Activated CD4-positive, alpha-beta memory T cell treated with anti-CD3 and anti-CD28 coated beads for 36 hours (primary cell): ENCODE measurements at regions of chr9 and their contacts with region 1.

Region 1: GRCh38 chr9:75027187-75028107 is 646 bp downstream of the CARNMT1 start:
- DNase-seq: peak; percentile 68
- H3K4me3 Mint-ChIP-seq: peak overlapping the region; percentile 99
- H3K27ac Mint-ChIP-seq: peak overlapping the region; percentile 97
- H3K4me1 Mint-ChIP-seq: peaks cover 35% of the 10 kb centered on the region
- H3K27me3 Mint-ChIP-seq: no peaks in the 10 kb centered on the region

Region 2: DNA sequence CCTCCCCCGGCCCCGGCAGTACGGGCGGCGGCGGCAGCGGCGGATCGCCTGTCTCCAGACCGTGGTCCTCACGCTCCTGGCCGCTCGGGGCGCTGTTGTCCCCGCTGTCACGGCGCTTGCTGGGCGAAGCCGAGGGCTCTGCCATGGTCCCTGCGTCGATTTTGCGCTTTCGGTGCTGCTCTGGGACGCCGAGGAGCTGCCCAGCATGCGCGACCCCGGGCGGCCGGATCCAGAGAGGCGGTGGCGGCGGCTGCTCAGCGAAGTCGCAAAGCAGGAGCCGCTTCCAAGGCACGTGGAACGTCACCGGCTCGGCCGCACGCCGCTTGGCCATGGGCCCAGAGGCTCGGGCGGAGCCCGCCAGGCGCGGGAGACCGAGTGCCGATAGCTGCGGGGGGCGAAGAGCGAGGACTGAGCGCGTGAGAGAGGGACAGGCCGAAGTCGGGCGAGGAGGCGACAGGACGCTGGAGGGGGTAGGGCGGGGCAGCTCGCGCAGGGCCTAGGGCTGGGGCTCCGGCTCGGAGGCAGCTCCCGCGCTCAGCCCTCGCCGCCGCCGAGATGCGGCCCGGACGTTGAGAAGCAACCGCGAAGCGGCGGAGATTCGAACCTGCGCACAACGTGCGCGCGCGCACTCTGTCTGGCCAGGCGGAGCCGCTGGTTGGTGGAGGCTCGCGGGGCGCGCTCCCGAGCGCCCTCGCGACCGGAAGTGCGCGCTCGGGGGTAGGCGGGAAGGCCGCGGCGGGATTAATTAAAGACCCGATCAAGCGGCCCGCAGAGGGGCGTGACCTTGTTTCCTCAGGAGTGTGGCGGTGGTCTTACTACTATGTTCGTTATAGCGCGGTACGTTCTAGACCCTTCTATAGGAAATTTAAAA is 74.9 kb before region 1 on chr9 and contains the start of gene C9orf40:
- CTCF ChIA-PET with region 1: interaction called, 17 read pairs
- POLR2A ChIA-PET with region 1: interaction called, 18 read pairs
- intact Hi-C with region 1: loop called (anchors 1 kb)
- DNase-seq: peak; percentile 93
- H3K4me3 Mint-ChIP-seq: peak within 1 kb of the TSS; percentile 92
- H3K27ac Mint-ChIP-seq: peak within 1 kb of the TSS; percentile 88
- H3K4me1 Mint-ChIP-seq: peaks cover 22% of the 10 kb centered on the region
- H3K27me3 Mint-ChIP-seq: no peaks in the 10 kb centered on the region
- total RNA-seq, gene C9orf40: 17.6 to 18.3 TPM

Region 3: DNA sequence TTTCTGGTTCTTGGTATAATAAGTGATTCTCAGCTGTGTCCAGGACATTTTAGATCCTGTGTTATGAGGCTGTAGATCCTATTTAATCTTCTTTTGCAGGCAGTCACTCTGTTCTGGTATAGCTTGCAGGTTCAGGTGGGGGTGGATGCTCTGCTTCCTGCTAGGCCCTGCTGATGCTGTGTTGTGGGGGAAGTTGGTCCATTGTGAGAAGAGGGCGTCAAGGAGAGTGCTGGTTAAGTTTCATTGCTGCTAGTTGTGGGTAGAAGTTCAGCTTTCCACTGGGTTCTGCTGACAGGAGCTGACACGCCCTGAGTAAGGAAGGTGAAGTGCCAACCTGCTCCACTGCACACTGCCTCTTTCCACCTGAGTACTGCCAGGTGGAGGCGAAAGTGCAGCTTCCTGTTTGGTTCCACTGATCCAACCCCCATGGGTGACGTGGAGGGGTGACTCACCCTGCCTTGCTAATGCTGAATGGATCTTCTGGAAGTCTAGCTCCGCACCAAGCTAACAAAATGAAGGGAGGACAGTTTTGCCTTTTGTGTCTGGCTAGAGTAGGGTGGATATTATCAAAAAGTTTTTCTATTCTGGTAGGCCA is 44.2 kb after region 1 on chr9:
- CTCF ChIA-PET with region 1: interaction called, 8 read pairs
- POLR2A ChIA-PET with region 1: interaction called, 5 read pairs
- intact Hi-C with region 1: loop called (anchors 1 kb)
- DNase-seq: peak; percentile 86
- H3K4me3 Mint-ChIP-seq: no peak overlapping the region
- H3K27ac Mint-ChIP-seq: peak overlapping the region; percentile 82
- H3K4me1 Mint-ChIP-seq: peaks cover 27% of the 10 kb centered on the region
- H3K27me3 Mint-ChIP-seq: no peaks in the 10 kb centered on the region

Region 4: DNA sequence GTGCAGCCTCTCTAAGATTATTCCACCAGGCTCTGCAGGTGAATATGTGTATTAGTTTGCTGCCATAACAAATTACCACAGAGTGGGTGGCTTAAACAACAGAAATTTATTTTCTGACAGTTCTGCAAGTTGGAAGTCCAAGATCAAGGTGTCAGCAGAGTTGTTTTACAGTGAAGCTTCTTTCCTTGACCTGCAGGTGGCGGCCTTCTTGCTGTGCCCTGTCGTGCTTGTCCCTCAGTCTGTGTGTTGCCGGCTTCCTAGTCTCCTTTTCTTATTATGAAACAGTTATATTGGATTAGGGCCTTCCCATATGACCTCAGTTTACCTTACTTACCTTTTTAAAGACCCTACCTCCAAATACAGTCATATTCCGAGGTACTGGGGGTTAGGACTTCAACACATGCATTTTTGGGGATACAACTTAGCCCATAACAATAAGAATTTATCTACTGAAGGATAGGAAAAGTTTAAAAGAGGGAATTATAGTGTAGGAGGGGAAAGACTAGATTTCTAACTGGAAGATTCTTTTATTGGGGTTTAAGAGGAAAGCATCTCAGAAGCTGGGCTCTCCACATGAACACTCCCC is 158.2 kb after region 1 on chr9:
- CTCF ChIA-PET with region 1: interaction called, 3 read pairs
- POLR2A ChIA-PET with region 1: no interaction called
- intact Hi-C with region 1: loop called (anchors 5 kb)
- DNase-seq: peak; percentile 69
- H3K4me3 Mint-ChIP-seq: no peak overlapping the region
- H3K27ac Mint-ChIP-seq: no peak overlapping the region
- H3K4me1 Mint-ChIP-seq: peaks cover 19% of the 10 kb centered on the region
- H3K27me3 Mint-ChIP-seq: no peaks in the 10 kb centered on the region